ENCODE measurements at regions of chr5 and their contacts with region 1.

Region 1: GRCh38 chr5:132746954-132747615 is at the start of gene CCNI2:
- DNase-seq: peak in 2 of 10 donors; percentile 66 to 73
- H3K4me3 ChIP-seq: peak within 1 kb of the TSS; percentile 33 to 79 (median 64)
- H3K27ac ChIP-seq: peak within 1 kb of the TSS in 58 of 59 donors; percentile 8 to 89 (median 73)
- H3K27me3 ChIP-seq: no peaks in the 10 kb centered on the region
- CTCF ChIP-seq: peak in 52 of 56 donors; percentile 9 to 67 (median 43)
- total RNA-seq, gene CCNI2: 0.26 to 4.5 (median 1.5) TPM in 119 of 120 experiments, not detected in the other

Region 2: DNA sequence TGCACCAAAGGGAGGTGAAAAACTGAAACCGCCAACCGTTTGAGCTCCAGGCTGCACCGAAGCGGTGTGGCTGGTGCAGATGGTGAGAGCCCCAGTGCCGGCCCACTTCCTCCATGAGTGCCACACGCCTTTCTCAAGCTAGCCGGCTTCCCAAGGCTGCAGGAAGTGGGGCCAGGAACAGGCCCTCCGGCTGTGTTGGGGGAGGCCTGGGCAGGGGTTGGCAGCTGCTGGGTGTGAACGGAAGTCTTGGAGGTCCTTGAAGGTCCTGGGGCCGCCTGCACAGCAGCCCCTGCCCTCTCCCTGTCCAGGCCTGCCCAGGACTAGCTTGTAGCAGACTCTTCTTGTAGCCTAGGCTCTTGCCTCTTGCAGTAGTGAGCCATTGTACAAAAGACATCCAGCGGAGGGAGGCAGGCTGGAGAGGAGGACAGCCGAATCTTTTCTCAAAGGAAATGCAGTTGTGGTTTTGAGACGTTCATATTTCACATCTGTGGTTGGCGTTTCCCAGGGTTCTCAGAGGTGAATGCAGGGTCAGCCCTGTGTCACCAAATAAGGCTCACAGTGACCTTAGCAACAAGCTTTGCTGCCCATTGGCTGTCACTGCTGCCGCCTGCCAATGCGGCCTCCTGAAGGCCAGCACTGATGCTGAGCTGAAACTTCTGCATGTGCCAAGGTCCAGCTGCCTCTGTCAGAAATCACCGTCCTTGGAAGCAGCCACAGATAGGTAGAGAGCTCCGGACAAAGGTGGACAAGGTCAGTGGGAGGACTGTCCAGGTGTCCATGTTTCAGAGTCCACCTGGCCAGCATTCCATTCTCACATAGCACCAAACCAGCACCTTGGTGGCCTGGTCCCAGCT is 280.4 kb before region 1 on chr5:
- intact Hi-C with region 1: no loop called
- DNase-seq: peak in 1 of 10 donors; percentile 51
- H3K4me3 ChIP-seq: no peak overlapping the region
- H3K27ac ChIP-seq: peak overlapping the region in 17 of 59 donors; percentile 5 to 52 (median 25)
- H3K27me3 ChIP-seq: no peaks in the 10 kb centered on the region
- CTCF ChIP-seq: no peak

Region 3: DNA sequence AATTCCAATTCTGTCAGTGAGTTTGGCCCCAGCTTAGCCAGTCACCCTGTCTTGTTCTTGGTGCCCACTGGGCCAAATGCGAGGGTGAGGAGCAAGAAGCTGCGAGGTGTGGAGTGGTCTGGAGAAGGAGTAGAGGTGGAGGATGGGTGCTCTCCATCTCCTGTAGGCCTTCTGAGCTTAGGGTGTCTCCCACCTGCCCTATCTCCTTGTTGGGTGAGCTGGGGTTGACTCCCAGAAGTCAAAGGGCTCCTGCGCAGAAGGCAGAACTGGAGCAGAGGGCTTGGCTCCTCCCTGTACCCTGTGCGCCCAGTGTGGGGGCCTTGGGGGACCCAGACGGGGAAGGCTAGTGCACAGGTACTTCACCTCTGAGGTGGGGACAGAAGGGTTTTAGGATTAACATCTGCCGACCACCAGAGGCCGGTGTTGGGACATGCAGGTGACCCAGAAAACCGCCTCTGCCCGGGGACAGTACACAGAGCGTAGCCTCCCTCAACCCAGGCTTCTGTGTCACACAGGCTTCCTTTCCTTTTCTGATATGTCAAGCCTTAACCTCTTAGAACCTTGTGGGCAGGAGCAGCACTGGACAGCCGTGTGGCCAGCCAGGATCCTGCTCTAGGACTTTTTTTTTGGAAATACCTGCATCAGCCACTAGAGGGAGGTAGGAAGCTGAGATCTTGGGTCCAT is 220.7 kb before region 1 on chr5:
- intact Hi-C with region 1: loop called in 1 of 2 experiments (anchors 10 kb)
- DNase-seq: peak in 1 of 10 donors; percentile 31
- H3K4me3 ChIP-seq: peak overlapping the region in 4 of 59 donors; percentile 4 to 23 (median 10)
- H3K27ac ChIP-seq: no peak overlapping the region
- H3K27me3 ChIP-seq: no peaks in the 10 kb centered on the region
- CTCF ChIP-seq: peak; percentile 62 to 93 (median 84)

Region 4: DNA sequence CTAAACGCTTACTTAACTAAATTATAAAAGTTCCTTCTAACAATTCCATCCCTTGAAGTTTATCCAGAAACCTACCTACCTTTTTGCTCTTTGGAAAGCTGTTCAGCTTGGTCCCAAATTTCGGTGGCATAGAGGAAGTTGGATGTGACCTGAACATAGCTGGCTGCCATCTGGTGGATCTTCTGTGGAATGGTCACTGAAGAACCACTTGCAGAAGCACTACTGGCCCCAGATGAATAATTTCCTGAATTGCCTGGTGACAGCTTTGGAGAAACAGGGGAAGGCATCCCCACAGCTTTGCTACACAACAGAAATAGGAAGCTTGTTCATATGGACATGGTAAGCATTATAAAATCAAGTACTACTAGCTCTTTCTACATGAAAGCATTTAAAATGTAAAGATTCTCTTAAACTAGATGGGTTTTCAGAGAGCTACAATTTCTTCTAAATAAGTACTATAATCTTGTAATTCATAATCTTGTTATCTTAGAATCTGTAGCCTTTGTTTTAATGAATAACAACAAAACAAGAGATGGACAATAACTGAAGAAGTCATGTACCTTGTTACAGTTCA is 136.3 kb after region 1 on chr5:
- intact Hi-C with region 1: no loop called
- DNase-seq: peak in 7 of 10 donors; percentile 48 to 72 (median 58)
- H3K4me3 ChIP-seq: no peak overlapping the region
- H3K27ac ChIP-seq: peak overlapping the region in 43 of 59 donors; percentile 2 to 84 (median 46)
- H3K27me3 ChIP-seq: no peaks in the 10 kb centered on the region
- CTCF ChIP-seq: peak; percentile 42 to 89 (median 76)

Region 5: GRCh38 chr5:133051580-133052332 is 304.7 kb after region 1 on chr5 and contains the start of gene HSPA4:
- intact Hi-C with region 1: no loop called
- DNase-seq: peak; percentile 96 to 99 (median 98)
- H3K4me3 ChIP-seq: peak within 1 kb of the TSS; percentile 72 to 100 (median 98)
- H3K27ac ChIP-seq: peak within 1 kb of the TSS; percentile 96 to 100 (median 100)
- H3K27me3 ChIP-seq: no peaks in the 10 kb centered on the region
- CTCF ChIP-seq: peak in 15 of 56 donors; percentile 3 to 38 (median 13)
- total RNA-seq, gene HSPA4: 61.6 to 183 (median 97.3) TPM